ENCODE measurements at regions of chr3 and their contacts with region 1.

Region 1: DNA sequence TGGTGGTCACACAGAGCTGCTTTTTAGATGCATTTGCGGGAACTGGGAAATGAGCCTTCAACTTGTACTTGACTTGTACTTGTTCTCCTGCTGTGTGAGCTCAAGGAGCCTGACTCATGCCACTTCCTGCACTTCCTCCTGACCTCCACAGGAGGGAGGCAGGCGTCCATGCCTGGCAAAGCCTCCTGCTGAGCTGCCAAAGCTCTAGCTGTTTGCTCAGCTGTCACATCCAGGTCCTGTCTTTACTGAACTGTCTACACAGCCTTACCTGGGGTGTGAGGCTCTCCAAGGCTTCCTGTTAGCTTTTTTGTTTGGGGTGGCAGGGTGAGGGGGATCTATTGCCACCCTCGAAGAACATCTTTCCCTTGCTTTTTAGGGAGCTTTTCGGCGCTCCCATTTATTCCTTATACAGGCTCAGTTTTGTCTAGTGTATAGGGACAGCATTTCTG is 6.4 kb downstream of the THPO start:
- DNase-seq: peak; percentile 77
- ATAC-seq: peak; percentile 99
- H3K4me3 Mint-ChIP-seq: no peak overlapping the region
- H3K27ac Mint-ChIP-seq: no peak overlapping the region
- H3K4me1 Mint-ChIP-seq: peaks cover 10% of the 10 kb centered on the region
- H3K27me3 Mint-ChIP-seq: no peaks in the 10 kb centered on the region
- CTCF ChIP-seq: peak; percentile 81

Region 2: DNA sequence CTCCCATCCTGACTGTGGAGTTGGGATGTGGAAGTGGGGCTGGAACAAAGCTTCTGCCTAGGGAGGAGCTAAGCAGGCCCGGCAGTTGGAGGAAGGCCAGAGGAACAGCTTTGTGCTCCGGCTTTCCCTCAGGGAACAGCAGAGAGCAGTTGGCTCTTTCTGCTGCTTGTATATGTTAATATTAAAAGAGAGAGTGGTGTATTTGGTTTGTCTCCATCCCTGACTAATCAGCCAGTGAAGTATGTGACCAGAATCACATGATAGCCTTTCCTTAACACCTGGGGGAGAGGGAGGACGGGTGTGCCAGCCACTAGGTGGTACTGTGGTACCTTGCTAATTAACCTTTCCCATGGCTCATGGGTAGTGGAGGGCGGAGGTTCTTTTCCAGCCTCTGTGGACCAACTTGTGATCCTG is 226.5 kb before region 1 on chr3:
- CTCF ChIA-PET with region 1: no interaction called
- POLR2A ChIA-PET with region 1: no interaction called
- intact Hi-C with region 1: no loop called
- DNase-seq: peak; percentile 61
- ATAC-seq: peak; percentile 85
- H3K4me3 Mint-ChIP-seq: no peak overlapping the region
- H3K27ac Mint-ChIP-seq: peak overlapping the region; percentile 30
- H3K4me1 Mint-ChIP-seq: no peaks in the 10 kb centered on the region
- H3K27me3 Mint-ChIP-seq: no peaks in the 10 kb centered on the region
- CTCF ChIP-seq: peak; percentile 18

Region 3: DNA sequence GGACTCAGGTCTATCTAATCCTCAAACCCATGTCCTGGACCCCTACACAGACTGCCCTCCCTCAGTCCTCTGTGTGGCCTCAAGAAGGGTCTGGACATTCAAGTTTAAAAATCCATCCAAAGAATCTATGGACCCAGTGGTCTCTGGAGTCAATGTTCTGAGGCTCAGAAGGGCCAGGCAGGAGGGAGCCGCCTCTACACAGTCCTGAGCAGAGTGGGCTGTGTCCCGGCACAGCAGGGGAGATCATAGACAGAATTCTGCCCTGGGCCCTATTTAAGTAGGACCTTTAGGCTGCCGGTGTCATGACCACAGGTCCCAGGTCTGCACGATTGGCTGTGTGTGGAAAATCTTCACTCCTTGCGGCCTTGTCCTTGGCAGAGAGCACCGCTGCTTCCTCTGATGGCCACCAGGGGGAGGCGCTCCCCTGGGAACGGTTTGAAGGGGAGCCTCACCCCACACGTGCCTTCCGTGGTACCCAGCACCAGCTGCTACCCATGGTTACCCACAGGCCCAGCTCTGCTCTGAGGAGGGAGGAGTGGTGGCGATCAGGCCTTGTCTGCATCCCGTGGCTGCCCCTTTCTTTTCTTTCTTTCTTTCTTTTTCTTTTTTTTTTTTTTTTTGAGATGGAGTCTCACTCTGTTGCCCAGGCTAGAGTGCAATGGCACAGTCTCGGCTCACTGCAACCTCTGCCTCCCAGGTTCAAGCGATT is 46.2 kb after region 1 on chr3:
- CTCF ChIA-PET with region 1: interaction called, 13 read pairs
- POLR2A ChIA-PET with region 1: no interaction called
- intact Hi-C with region 1: no loop called
- DNase-seq: peak; percentile 78
- ATAC-seq: peak; percentile 98
- H3K4me3 Mint-ChIP-seq: no peak overlapping the region
- H3K27ac Mint-ChIP-seq: no peak overlapping the region
- H3K4me1 Mint-ChIP-seq: no peaks in the 10 kb centered on the region
- H3K27me3 Mint-ChIP-seq: peaks cover under 1% of the 10 kb centered on the region
- CTCF ChIP-seq: peak; percentile 87

Region 4: DNA sequence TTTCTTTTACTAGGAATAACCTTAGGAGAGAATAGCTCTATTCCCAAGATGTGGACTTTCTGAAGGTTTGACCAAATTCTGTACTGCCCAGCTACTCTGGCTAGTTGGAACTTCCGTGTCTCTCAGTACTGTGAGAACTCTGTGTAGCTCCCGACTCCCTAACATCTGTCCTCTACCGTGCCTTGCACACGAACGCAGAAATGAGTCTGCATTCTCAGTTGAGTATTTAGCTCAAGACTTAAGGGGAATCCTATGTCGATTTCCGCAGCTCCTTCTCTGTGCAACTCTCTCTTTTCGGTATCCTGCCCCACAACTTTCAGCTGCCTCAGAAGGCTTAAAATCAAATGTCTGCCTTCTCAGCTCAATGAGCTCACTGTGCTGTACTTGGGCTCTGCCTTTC is 103.3 kb after region 1 on chr3:
- CTCF ChIA-PET with region 1: interaction called, 11 read pairs
- POLR2A ChIA-PET with region 1: no interaction called
- intact Hi-C with region 1: no loop called
- DNase-seq: no peak
- ATAC-seq: no peak
- H3K4me3 Mint-ChIP-seq: no peak overlapping the region
- H3K27ac Mint-ChIP-seq: no peak overlapping the region
- H3K4me1 Mint-ChIP-seq: peaks cover 20% of the 10 kb centered on the region
- H3K27me3 Mint-ChIP-seq: peaks cover 30% of the 10 kb centered on the region
- CTCF ChIP-seq: no peak

Measured in activated CD8-positive, alpha-beta T cell treated with anti-CD3 and anti-CD28 coated beads for 36 hours (primary cell).